A673 (cell line): ENCODE measurements at regions of chr5 and their contacts with region 1.

Region 1: GRCh38 chr5:41707853-41708603 is 162.2 kb downstream of the OXCT1 start:
- DNase-seq: peak; percentile 68
- H3K4me3 ChIP-seq: no peak overlapping the region
- H3K27ac ChIP-seq: no peak overlapping the region
- H3K4me1 ChIP-seq: no peaks in the 10 kb centered on the region
- H3K27me3 ChIP-seq: no peaks in the 10 kb centered on the region
- CTCF ChIP-seq: peak; percentile 67

Region 2: DNA sequence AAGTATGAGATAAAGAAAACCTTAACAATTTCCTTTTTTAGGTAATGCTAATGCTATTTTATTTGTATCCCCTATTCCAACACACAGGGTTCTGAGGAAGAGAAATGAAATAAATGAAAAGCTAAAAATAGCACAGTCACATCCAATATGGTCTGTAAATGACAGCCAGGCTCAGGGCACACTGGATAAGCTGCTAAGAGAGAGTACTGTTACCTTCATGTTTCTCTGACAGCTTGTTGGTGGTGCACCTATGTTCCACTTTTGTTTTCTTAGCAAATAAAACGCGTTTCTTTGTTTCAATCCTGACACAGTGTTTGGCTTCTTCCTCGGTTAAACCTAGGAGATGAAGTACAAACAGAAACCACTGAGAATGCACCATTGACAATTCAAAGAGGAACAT is 536.0 kb before region 1 on chr5:
- CTCF ChIA-PET with region 1: no interaction called
- POLR2A ChIA-PET with region 1: no interaction called
- intact Hi-C with region 1: no loop called
- DNase-seq: no peak
- H3K4me3 ChIP-seq: no peak overlapping the region
- H3K27ac ChIP-seq: no peak overlapping the region
- H3K4me1 ChIP-seq: no peaks in the 10 kb centered on the region
- H3K27me3 ChIP-seq: no peaks in the 10 kb centered on the region
- CTCF ChIP-seq: no peak

Region 3: DNA sequence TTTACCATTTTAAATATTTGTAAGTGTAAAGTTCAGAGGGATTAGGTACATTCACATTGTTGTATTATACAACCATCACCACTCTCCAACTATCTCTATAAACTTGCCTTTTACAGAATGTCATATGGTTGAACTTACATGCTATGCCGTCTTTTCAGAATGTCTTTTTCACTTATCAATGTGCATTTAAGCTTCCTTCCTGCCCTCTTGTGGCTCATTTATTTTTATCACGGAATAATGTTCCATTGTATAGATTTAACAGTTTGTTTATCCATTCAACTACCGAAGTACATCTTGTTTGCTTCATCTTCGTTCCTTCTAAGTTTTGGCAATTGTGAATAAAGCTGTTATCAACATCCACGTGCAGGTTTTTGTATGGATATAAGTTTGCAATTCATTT is 361.4 kb before region 1 on chr5:
- CTCF ChIA-PET with region 1: no interaction called
- POLR2A ChIA-PET with region 1: no interaction called
- intact Hi-C with region 1: no loop called
- DNase-seq: peak; percentile 43
- H3K4me3 ChIP-seq: no peak overlapping the region
- H3K27ac ChIP-seq: no peak overlapping the region
- H3K4me1 ChIP-seq: peaks cover 5% of the 10 kb centered on the region
- H3K27me3 ChIP-seq: no peaks in the 10 kb centered on the region
- CTCF ChIP-seq: peak; percentile 40; the same call in 1 of the 2 replicates

Region 4: GRCh38 chr5:41686767-41687166 is 21.3 kb before region 1 on chr5:
- CTCF ChIA-PET with region 1: no interaction called
- POLR2A ChIA-PET with region 1: no interaction called
- intact Hi-C with region 1: no loop called
- DNase-seq: no peak
- H3K4me3 ChIP-seq: no peak overlapping the region
- H3K27ac ChIP-seq: no peak overlapping the region
- H3K4me1 ChIP-seq: no peaks in the 10 kb centered on the region
- H3K27me3 ChIP-seq: no peaks in the 10 kb centered on the region
- CTCF ChIP-seq: no peak

Region 5: GRCh38 chr5:41843456-41844370 is 135.7 kb after region 1 on chr5:
- CTCF ChIA-PET with region 1: interaction called, 3 read pairs
- POLR2A ChIA-PET with region 1: no interaction called
- intact Hi-C with region 1: loop called (anchors 1 kb)
- DNase-seq: peak; percentile 80
- H3K4me3 ChIP-seq: no peak overlapping the region
- H3K27ac ChIP-seq: no peak overlapping the region
- H3K4me1 ChIP-seq: no peaks in the 10 kb centered on the region
- H3K27me3 ChIP-seq: no peaks in the 10 kb centered on the region
- CTCF ChIP-seq: peak; percentile 87